ENCODE measurements at regions of chr18 and their contacts with region 1.

Region 1: GRCh38 chr18:70205421-70206397 is at the start of gene RTTN:
- DNase-seq: peak; percentile 98
- ATAC-seq: peak; percentile 100
- total RNA-seq, gene RTTN: 6.8 TPM

Region 2: GRCh38 chr18:68865021-68865420 is 1340.7 kb before region 1 on chr18:
- intact Hi-C with region 1: no loop called
- DNase-seq: no peak
- ATAC-seq: no peak

Region 3: DNA sequence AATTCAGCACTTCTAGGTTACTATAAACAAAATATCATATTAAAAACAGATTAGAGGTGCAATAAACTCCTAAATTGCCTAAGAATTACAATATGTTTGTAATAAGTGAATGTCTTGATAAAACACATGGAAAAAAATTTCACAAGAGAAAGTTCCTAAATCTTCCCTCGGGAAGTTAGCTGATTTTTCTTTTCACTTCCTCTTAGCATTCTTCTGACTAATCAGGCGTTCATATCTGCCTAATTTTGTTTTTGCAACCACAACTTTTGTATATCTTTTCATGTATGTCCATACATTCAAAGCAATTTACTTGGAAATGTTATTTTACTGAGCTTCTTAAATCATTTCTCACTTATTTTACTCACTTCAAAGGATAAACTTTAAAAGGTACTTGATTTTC is 88.8 kb before region 1 on chr18:
- intact Hi-C with region 1: no loop called
- DNase-seq: no peak
- ATAC-seq: no peak

Region 4: GRCh38 chr18:70279470-70279869 is 73.8 kb after region 1 on chr18:
- intact Hi-C with region 1: loop called (anchors 10 kb)
- DNase-seq: no peak
- ATAC-seq: no peak

Region 5: GRCh38 chr18:70390371-70391090 is 184.8 kb after region 1 on chr18:
- intact Hi-C with region 1: no loop called
- DNase-seq: no peak
- ATAC-seq: no peak

Measured in left ventricle myocardium superior (tissue), 1 donor.